Transverse colon (tissue), 4 donors: ENCODE measurements at regions of chr2 and their contacts with region 1.

Region 1: GRCh38 chr2:2889646-2890045 is 488.0 kb downstream of the EIPR1 start:
- DNase-seq: no peak
- H3K4me3 ChIP-seq: no peak overlapping the region
- H3K27ac ChIP-seq: no peak overlapping the region
- H3K4me1 ChIP-seq: no peaks in the 10 kb centered on the region
- H3K27me3 ChIP-seq: no peaks in the 10 kb centered on the region
- CTCF ChIP-seq: no peak
- EP300 ChIP-seq: no peak
- POLR2A ChIP-seq: no peak

Region 2: GRCh38 chr2:2253172-2254016 is 636.3 kb before region 1 on chr2:
- in situ Hi-C with region 1: no loop called
- intact Hi-C with region 1: loop called (anchors 5 kb)
- DNase-seq: no peak
- H3K4me3 ChIP-seq: no peak overlapping the region
- H3K27ac ChIP-seq: no peak overlapping the region
- H3K4me1 ChIP-seq: no peaks in the 10 kb centered on the region
- H3K27me3 ChIP-seq: no peaks in the 10 kb centered on the region
- CTCF ChIP-seq: no peak
- EP300 ChIP-seq: no peak
- POLR2A ChIP-seq: no peak